CD8-positive, alpha-beta memory T cell (primary cell): ENCODE measurements at regions of chr15 and their contacts with region 1.

Region 1: GRCh38 chr15:63191895-63192618 is 2.7 kb downstream of the RAB8B start:
- DNase-seq: peak; percentile 24 to 90 (median 81)
- H3K4me3 ChIP-seq: peak overlapping the region; percentile 46
- H3K4me3 Mint-ChIP-seq: peak overlapping the region; percentile 84 to 100 (median 96)
- H3K27ac ChIP-seq: peak overlapping the region; percentile 75
- H3K27ac Mint-ChIP-seq: peak overlapping the region; percentile 88 to 99 (median 96)
- H3K4me1 ChIP-seq: peaks cover 71% of the 10 kb centered on the region
- H3K4me1 Mint-ChIP-seq: peaks cover 75 to 85% (median 80%) of the 10 kb centered on the region in 3 donors
- H3K27me3 ChIP-seq: no peaks in the 10 kb centered on the region
- H3K27me3 Mint-ChIP-seq: no peaks in the 10 kb centered on the region

Region 2: DNA sequence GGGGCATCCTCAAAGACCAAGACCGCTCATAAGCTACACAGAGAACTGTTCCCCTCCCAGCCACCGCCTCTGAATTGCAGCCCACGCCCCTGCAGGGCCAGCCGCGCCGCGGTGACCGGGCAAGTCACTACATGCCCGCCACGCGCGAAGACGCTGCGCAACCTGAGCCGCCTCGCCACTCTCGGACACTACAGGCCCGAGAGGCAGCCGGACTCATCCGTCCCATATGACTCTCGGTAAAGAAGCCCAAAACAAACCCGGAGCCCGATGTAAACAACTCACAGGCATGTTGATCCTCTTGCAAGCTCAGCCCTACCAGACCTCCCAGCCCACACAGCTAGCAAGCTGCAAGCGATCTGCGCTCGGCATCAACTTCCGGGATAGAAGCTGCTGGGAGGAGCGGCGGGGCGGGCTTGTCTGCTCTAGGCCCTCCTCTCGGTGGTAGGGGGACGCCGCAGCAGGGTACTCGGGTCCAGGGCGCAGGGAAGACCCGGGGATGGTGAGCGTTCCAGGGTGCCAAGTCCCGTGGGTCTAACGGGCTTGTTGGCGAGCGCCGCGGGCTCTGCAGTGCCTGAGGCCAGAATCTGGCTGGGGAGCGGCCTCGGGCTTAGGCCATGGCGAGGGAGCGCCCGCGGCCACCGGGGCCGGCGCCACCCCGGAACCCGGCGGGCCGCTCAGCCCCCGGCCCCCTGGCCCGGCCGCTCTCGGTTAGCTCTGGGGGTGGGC is 34.8 kb before region 1 on chr15 and contains the start of gene RPS27L:
- CTCF ChIA-PET with region 1: interaction called, 5 read pairs
- POLR2A ChIA-PET with region 1: interaction called, 20 read pairs
- DNase-seq: peak; percentile 73 to 91 (median 83)
- H3K4me3 ChIP-seq: peak within 1 kb of the TSS; percentile 83
- H3K4me3 Mint-ChIP-seq: peak within 1 kb of the TSS; percentile 98 to 100 (median 100)
- H3K27ac ChIP-seq: peak within 1 kb of the TSS; percentile 82
- H3K27ac Mint-ChIP-seq: peak within 1 kb of the TSS; percentile 91 to 97 (median 96)
- H3K4me1 ChIP-seq: peaks cover 19% of the 10 kb centered on the region
- H3K4me1 Mint-ChIP-seq: peaks cover 18 to 37% (median 31%) of the 10 kb centered on the region in 3 donors
- H3K27me3 ChIP-seq: no peaks in the 10 kb centered on the region
- H3K27me3 Mint-ChIP-seq: no peaks in the 10 kb centered on the region
- total RNA-seq, gene RPS27L: 214 to 221 TPM

Region 3: GRCh38 chr15:63203451-63204090 is 11.5 kb after region 1 on chr15:
- CTCF ChIA-PET with region 1: interaction called, 30 read pairs
- POLR2A ChIA-PET with region 1: interaction called, 17 read pairs
- DNase-seq: peak; percentile 43 to 77 (median 60)
- H3K4me3 ChIP-seq: no peak overlapping the region
- H3K4me3 Mint-ChIP-seq: peak overlapping the region; percentile 6 to 68 (median 50)
- H3K27ac ChIP-seq: no peak overlapping the region
- H3K27ac Mint-ChIP-seq: peak overlapping the region in 6 of 8 donors; percentile 40 to 91 (median 66)
- H3K4me1 ChIP-seq: peaks cover 81% of the 10 kb centered on the region
- H3K4me1 Mint-ChIP-seq: peaks cover 86 to 96% (median 94%) of the 10 kb centered on the region in 3 donors
- H3K27me3 ChIP-seq: no peaks in the 10 kb centered on the region
- H3K27me3 Mint-ChIP-seq: no peaks in the 10 kb centered on the region

Region 4: DNA sequence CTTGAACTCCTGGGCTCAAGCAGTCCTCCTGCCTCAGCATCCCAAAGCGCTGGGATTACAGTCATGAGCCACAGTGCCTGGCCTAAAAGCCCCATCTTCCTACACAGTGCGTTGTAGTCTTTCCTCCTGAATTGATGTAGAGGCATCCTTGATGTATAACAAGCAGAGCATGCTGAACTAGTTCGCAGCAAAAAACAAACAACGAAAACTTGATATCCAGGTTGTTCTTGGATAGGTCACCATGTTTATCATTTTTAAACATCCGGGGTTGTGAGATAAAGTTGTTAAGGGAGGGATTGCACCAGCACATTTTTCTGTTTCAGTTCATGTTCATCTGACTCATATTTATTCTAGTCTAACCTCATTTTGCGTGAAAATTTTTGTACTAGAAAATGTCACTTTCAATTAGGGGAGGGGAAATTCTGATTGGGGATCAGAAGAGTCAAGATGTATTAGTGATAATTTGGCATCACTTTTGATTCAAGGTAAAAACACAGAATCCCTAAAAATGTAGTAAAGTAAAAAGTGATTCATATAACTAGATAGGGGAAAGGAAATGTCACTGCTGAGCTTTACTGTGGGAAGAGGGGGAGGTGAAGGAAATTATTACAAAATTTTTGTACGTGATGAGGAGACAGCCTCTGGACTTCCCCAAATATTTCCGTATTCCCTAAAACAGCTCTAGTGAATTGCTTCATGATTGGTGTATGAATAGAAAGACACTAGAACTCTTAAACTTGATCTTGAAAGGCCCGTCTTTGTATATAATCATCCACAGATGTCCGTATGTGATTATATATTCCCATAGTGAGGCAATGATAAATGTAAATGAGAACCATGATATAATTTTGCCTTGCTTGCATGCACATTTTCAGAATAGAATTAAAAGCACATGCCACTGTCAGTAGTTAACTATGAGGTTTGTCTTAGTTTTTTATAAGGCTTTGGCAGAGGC is 20.3 kb after region 1 on chr15:
- CTCF ChIA-PET with region 1: interaction called, 8 read pairs
- POLR2A ChIA-PET with region 1: interaction called, 18 read pairs
- DNase-seq: no peak
- H3K4me3 ChIP-seq: no peak overlapping the region
- H3K4me3 Mint-ChIP-seq: peak overlapping the region; percentile 15 to 73 (median 55)
- H3K27ac ChIP-seq: peak overlapping the region; percentile 11
- H3K27ac Mint-ChIP-seq: peak overlapping the region; percentile 61 to 93 (median 79)
- H3K4me1 ChIP-seq: peaks cover 68% of the 10 kb centered on the region
- H3K4me1 Mint-ChIP-seq: peaks cover 68 to 90% (median 75%) of the 10 kb centered on the region in 3 donors
- H3K27me3 ChIP-seq: no peaks in the 10 kb centered on the region
- H3K27me3 Mint-ChIP-seq: no peaks in the 10 kb centered on the region

Region 5: DNA sequence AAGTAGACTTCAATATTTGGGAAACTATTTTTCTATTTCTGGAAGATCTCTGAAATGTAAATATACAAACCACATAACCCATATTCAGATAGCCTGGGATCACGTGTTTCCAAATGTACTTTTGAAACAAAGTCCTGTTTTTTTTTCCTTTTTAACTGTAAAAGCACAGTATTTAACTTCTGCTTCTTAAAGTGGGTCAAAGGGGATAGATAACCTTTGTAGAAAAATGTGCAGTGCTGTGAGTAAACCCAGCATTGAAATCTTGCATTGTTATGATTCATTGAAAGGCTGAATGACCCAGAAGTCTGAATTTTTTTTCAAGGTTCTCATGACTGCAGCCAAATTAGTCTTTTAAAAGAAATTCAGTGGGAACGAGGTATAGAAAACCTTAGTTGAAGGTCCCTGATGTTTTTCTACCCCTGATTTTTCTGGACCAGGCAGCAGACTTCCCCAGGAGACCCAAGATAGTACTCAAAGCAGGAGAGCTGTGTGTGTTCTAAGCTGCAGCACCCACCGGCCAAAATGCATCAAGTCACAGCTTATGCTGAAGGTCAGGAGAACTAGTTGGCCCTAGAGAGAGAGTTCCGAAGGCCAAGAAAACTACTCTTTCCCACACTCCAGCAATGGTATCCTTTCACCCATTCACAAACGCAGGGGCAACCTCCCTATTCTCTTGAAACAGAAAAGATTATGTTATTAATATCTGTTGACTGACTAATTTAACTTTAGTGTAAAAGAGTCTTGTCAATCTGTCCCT is 41.8 kb after region 1 on chr15:
- CTCF ChIA-PET with region 1: interaction called, 13 read pairs
- POLR2A ChIA-PET with region 1: interaction called, 16 read pairs
- DNase-seq: no peak
- H3K4me3 ChIP-seq: no peak overlapping the region
- H3K4me3 Mint-ChIP-seq: peak overlapping the region; percentile 12 to 84 (median 29)
- H3K27ac ChIP-seq: no peak overlapping the region
- H3K27ac Mint-ChIP-seq: peak overlapping the region; percentile 47 to 88 (median 83)
- H3K4me1 ChIP-seq: peaks cover 53% of the 10 kb centered on the region
- H3K4me1 Mint-ChIP-seq: peaks cover 72 to 87% (median 82%) of the 10 kb centered on the region in 3 donors
- H3K27me3 ChIP-seq: no peaks in the 10 kb centered on the region
- H3K27me3 Mint-ChIP-seq: no peaks in the 10 kb centered on the region

Region 6: GRCh38 chr15:63677730-63678129 is 485.7 kb after region 1 on chr15:
- CTCF ChIA-PET with region 1: no interaction called
- POLR2A ChIA-PET with region 1: no interaction called
- DNase-seq: no peak
- H3K4me3 ChIP-seq: no peak overlapping the region
- H3K4me3 Mint-ChIP-seq: no peak overlapping the region
- H3K27ac ChIP-seq: no peak overlapping the region
- H3K27ac Mint-ChIP-seq: peak overlapping the region in 5 of 8 donors; percentile 7 to 93 (median 63)
- H3K4me1 ChIP-seq: peaks cover 8% of the 10 kb centered on the region
- H3K4me1 Mint-ChIP-seq: peaks cover 17 to 30% (median 27%) of the 10 kb centered on the region in 3 donors
- H3K27me3 ChIP-seq: no peaks in the 10 kb centered on the region
- H3K27me3 Mint-ChIP-seq: no peaks in the 10 kb centered on the region